ENCODE measurements at regions of chr11 and their contacts with region 1.

Region 1: GRCh38 chr11:15074206-15075161 is 1.1 kb downstream of the CALCB start:
- ATAC-seq: peak; percentile 84 to 92 (median 85)
- H3K4me3 ChIP-seq: peak overlapping the region; percentile 42 to 52 (median 47)
- H3K27ac ChIP-seq: no peak overlapping the region
- H3K4me1 ChIP-seq: peaks cover 0 to 3% of the 10 kb centered on the region in 2 donors

Region 2: DNA sequence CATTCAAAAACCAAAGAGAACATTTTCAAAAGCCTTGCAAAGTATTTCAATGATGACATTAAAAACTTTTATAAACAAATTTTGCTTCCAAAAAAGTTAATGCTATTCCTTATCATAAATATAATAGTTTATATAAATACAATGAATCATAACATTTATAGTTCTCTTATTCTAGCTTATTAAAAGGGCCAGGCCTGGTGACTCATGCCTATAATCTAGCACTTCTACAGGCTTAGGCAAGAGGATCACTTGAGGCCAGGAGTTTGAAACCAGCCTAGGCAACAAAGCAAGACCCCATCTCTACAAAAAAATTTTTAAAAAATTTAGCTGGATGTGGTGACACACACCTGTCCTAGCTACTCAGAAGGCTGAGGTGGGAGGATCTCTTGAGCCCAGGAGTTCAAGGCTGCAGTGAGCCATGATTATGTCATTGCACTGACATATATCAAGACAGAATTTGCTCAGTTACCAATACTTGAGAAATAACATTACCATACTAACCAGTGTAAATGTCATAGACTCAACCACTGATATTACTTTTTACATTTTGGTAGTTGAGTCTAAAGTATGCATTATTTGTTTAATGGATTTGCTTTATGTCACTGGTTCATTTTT is 238.9 kb before region 1 on chr11:
- in situ Hi-C with region 1: no loop called
- ATAC-seq: no peak
- H3K4me3 ChIP-seq: no peak overlapping the region
- H3K27ac ChIP-seq: no peak overlapping the region
- H3K4me1 ChIP-seq: no peaks in the 10 kb centered on the region

Region 3: DNA sequence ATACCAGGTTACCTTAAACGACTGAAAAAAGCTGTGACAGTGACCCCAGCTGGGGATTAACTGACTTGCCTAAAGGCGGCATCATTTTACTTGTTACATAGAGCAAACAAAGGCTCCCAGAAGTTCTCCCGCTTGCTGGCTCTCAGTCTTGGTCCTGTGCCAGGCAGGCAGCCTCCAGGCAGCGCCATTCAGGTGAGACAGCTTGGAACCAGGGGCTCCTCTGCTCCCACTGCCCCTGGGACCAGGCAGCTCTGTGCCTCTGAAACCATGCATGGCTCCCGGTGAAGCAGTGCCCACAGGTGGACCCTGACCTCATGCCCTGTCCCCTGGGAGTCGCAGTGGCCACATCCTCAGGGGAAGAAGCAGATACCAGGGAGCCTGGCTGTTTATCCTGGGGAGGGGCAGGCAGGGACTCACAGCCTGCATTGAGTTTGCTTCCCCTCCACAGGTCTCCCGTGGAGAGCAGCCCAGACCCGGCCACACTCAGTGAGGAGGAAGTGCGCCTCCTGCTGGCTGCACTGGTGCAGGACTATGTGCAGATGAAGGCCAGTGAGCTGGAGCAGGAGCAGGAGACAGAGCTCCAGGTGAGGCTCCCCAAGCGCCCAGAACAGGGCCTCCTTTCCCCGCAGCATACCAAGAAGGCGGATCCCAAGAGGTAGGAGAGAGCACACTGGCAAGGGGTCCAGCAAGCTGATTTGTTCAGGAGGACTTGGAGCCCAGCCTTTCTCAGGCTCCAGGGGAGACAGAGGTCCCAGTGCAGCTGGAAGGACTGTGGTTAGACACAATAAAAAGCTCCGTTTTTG is 166.9 kb before region 1 on chr11:
- in situ Hi-C with region 1: loop called in 3 of 9 experiments (anchors 10 to 25 kb)
- ATAC-seq: peak; percentile 31 to 85 (median 71)
- H3K4me3 ChIP-seq: no peak overlapping the region
- H3K27ac ChIP-seq: no peak overlapping the region
- H3K4me1 ChIP-seq: no peaks in the 10 kb centered on the region

Region 4: DNA sequence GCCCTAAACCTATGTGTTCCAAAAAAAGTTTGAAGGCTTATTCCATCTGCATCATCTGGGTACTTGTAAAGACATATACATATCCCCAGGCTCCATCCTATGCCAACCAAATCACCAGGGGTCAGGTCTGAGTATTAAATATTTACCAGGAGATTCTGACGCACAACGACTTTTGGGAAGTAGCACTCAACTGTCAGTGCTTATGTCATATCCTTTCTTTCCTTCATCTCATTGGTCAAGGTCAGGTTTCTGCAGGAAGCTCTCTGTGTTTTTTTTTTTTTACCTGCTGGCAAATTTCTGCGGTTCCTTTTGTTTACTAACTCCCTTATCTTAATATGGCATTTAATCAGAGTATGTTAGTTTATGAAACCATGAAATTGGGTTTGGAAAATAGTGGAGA is 159.9 kb before region 1 on chr11:
- in situ Hi-C with region 1: loop called in 3 of 9 experiments (anchors 10 to 25 kb)
- ATAC-seq: no peak
- H3K4me3 ChIP-seq: no peak overlapping the region
- H3K27ac ChIP-seq: no peak overlapping the region
- H3K4me1 ChIP-seq: no peaks in the 10 kb centered on the region

Region 5: DNA sequence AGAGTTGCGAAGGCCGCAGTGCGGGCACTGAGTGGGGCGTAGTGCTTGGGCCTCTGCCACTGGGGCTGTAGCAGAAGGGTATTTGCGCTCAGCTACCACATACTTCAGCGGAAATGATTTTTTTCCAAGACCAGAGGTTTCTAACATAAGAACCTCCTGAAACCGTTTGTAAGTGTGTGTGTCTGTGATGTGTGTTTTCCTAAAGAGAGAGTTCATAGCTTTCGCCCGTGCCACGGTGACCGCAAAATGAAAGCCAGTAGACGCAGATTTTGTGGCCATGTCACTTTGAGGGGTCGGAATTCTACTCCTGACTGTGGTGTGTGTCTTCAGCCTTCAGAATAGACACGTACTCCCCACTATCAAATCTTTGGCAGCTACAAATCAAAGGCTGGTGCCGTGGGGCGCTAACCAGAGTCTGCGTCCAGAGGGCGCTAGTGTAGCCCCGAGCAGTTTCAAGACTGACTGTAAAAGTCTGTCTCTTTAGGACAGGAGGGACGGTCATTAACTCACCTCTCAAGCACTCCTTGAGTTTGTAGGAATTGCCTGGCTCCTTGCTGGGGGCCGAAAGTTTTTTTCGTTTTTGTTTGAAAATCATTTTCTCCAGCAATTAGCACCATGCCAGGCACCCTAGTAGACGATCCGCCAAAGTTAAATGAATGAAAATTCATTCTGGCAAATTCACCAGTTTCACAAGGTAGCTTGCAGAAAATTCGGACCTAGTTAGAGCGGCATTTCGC is 99.8 kb before region 1 on chr11:
- in situ Hi-C with region 1: no loop called
- ATAC-seq: peak; percentile 12 to 66 (median 42)
- H3K4me3 ChIP-seq: peak overlapping the region; percentile 18 to 29 (median 26)
- H3K27ac ChIP-seq: no peak overlapping the region
- H3K4me1 ChIP-seq: peaks cover 10 to 16% of the 10 kb centered on the region in 2 donors

Region 6: DNA sequence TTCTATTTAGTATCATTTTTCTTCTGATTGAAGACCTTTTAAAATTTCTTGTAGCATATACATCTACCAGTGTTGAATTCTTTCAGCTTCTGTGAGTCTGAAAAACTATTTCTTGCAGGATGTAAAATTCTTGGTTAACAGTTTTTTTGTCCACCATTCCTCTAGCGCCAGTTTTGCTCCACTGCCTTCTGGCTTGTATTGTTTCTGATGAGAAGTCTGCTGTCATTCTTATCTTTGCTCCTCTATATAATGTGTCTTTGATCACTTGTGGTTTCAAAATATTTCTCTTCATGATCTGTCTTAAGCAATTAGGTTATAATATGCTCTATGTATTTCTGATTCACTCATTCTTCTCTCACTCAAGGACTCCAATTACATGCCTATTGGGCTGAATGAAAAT is 192.5 kb after region 1 on chr11:
- in situ Hi-C with region 1: no loop called
- ATAC-seq: no peak
- H3K4me3 ChIP-seq: no peak overlapping the region
- H3K27ac ChIP-seq: no peak overlapping the region
- H3K4me1 ChIP-seq: no peaks in the 10 kb centered on the region

Measured in motor neuron (in vitro differentiated cells).